ENCODE measurements at regions of chr19 and their contacts with region 1.

Region 1: GRCh38 chr19:10112895-10113591 is 1.6 kb downstream of the P2RY11 start:
- DNase-seq: peak in 1 of 2 experiments; percentile 94
- H3K4me3 ChIP-seq: no peak overlapping the region
- H3K27ac ChIP-seq: no peak overlapping the region
- H3K4me1 ChIP-seq: no peaks in the 10 kb centered on the region
- H3K27me3 ChIP-seq: no peaks in the 10 kb centered on the region
- CTCF ChIP-seq: peak; percentile 77 to 80 (median 79)
- EP300 ChIP-seq: no peak
- POLR2A ChIP-seq: peak in 1 of 2 experiments; percentile 31; a peak in 1 of 3 replicates
- RAD21 ChIP-seq: peak; percentile 53 to 69

Region 2: DNA sequence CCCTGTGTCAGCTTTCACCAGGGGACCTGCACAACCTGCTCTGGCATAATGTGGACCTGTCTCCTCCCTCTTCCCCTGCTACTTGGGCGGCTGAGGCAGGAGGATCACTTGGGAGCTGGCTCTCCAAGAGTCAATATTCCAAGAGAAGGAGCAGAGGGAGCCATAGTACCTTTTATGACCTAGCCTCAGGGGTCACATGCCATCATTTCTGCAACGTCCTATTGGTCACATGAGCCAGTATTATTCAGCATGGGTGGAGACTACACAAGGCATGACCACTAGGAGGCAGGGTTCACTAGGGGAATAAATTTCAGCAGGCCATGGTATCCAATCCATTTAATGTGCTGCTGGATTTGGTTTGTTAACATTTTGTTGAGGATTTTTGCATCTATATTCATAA is 38.9 kb before region 1 on chr19:
- CTCF ChIA-PET with region 1: interaction called, 10 read pairs
- POLR2A ChIA-PET with region 1: interaction called, 6 read pairs
- DNase-seq: no peak
- H3K4me3 ChIP-seq: no peak overlapping the region
- H3K27ac ChIP-seq: no peak overlapping the region
- H3K4me1 ChIP-seq: peaks cover 0 to 4% (median 1%) of the 10 kb centered on the region in 4 experiments; a peak in 3 of 7 replicates
- H3K27me3 ChIP-seq: peaks cover 0 to 2% (median 0%) of the 10 kb centered on the region in 4 experiments; a peak in 1 of 7 replicates
- CTCF ChIP-seq: peak in 2 of 3 experiments; percentile 39 to 55; a peak in 3 of 4 replicates
- EP300 ChIP-seq: no peak
- POLR2A ChIP-seq: no peak
- RAD21 ChIP-seq: peak; percentile 49 to 52

Region 3: DNA sequence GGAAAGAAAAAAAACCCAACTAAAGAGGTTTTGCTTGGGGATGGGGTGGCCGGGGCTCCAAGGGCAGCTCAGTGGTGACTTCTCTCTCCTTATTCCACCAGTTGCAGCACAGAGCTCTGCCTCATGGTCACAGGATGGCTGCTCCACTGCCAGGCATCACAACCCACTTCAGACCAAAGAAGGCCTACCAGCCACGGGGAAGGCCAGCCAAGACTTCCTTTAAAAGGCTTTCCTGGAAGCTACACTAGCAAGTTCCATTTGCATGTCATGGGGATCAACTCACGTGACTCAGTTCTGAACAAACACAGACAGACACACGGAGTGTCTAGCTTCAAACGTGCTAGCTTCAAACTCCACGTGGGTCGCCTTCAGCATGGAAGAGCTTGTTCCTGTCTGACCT is 19.9 kb after region 1 on chr19:
- CTCF ChIA-PET with region 1: interaction called, 10 read pairs
- POLR2A ChIA-PET with region 1: interaction called, 412 read pairs
- DNase-seq: no peak
- H3K4me3 ChIP-seq: no peak overlapping the region
- H3K27ac ChIP-seq: no peak overlapping the region
- H3K4me1 ChIP-seq: no peaks in the 10 kb centered on the region
- H3K27me3 ChIP-seq: no peaks in the 10 kb centered on the region
- CTCF ChIP-seq: no peak
- EP300 ChIP-seq: no peak
- POLR2A ChIP-seq: no peak
- RAD21 ChIP-seq: no peak